Activated T-helper 1 cell treated with anti-CD3 and anti-CD28 coated beads, Interleukin-12 subunit alpha, Interleukin-12 subunit beta, Interleukin-2, Interleukin-4 antibody, amounts not matched to agents 30 ng/mL and 10 ng/mL and 1 ng/mL, durations not matched to agents 14 hours and 24 hours and 36 hours (primary cell): ENCODE measurements at regions of chr3 and their contacts with region 1.

Region 1: GRCh38 chr3:152524198-152525140 is 255.7 kb downstream of the MBNL1 start:
- DNase-seq: no peak
- H3K4me3 Mint-ChIP-seq: no peak overlapping the region
- H3K27ac Mint-ChIP-seq: no peak overlapping the region
- H3K4me1 Mint-ChIP-seq: no peaks in the 10 kb centered on the region
- H3K27me3 Mint-ChIP-seq: peaks cover 15% of the 10 kb centered on the region

Region 2: GRCh38 chr3:151439652-151440129 is 1084.8 kb before region 1 on chr3:
- intact Hi-C with region 1: loop called (anchors 1 kb)
- DNase-seq: no peak
- H3K4me3 Mint-ChIP-seq: no peak overlapping the region
- H3K27ac Mint-ChIP-seq: no peak overlapping the region
- H3K4me1 Mint-ChIP-seq: no peaks in the 10 kb centered on the region
- H3K27me3 Mint-ChIP-seq: peaks cover 3% of the 10 kb centered on the region

Region 3: DNA sequence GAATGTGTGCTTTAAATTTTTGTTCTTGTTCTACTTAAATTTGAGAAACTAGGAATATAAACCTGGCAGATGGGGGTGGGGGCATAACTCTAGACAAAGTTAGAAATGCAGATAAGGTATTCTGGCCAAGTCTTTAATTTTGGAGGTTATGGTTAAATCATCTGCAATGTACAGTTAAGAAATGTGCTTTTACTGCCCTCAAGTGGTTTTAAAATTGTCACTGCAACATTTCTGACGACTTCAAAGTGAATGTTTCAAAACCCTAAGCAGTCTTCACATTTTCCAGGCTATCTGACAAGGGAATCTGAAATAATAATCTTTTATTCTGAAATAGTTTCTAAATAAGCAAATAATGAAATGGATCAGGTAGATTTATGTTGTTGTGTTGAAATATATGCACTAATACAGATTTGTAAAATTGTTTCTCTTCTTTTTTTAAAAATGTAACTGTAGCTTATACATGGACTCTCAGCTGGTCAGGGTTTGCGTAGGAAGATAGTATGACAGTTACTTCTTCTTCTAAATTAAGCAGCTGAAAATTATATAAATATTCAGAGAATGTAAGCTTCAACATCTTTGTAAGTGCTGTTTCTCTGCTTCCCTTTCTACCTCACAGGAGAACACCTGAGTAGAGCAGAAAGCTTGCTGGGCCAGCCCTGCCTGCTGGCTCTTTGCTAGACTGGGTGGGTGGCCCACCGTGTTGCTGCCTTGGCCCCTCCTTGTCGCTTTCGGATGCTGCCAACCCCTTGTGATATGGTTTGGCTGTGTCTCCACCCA is 606.0 kb before region 1 on chr3:
- intact Hi-C with region 1: loop called (anchors 5 kb)
- DNase-seq: no peak
- H3K4me3 Mint-ChIP-seq: no peak overlapping the region
- H3K27ac Mint-ChIP-seq: no peak overlapping the region
- H3K4me1 Mint-ChIP-seq: no peaks in the 10 kb centered on the region
- H3K27me3 Mint-ChIP-seq: peaks cover 5% of the 10 kb centered on the region

Region 4: GRCh38 chr3:152365766-152366593 is 158.5 kb before region 1 on chr3:
- intact Hi-C with region 1: no loop called
- DNase-seq: no peak
- H3K4me3 Mint-ChIP-seq: no peak overlapping the region
- H3K27ac Mint-ChIP-seq: no peak overlapping the region
- H3K4me1 Mint-ChIP-seq: peaks cover 65% of the 10 kb centered on the region
- H3K27me3 Mint-ChIP-seq: no peaks in the 10 kb centered on the region

Region 5: DNA sequence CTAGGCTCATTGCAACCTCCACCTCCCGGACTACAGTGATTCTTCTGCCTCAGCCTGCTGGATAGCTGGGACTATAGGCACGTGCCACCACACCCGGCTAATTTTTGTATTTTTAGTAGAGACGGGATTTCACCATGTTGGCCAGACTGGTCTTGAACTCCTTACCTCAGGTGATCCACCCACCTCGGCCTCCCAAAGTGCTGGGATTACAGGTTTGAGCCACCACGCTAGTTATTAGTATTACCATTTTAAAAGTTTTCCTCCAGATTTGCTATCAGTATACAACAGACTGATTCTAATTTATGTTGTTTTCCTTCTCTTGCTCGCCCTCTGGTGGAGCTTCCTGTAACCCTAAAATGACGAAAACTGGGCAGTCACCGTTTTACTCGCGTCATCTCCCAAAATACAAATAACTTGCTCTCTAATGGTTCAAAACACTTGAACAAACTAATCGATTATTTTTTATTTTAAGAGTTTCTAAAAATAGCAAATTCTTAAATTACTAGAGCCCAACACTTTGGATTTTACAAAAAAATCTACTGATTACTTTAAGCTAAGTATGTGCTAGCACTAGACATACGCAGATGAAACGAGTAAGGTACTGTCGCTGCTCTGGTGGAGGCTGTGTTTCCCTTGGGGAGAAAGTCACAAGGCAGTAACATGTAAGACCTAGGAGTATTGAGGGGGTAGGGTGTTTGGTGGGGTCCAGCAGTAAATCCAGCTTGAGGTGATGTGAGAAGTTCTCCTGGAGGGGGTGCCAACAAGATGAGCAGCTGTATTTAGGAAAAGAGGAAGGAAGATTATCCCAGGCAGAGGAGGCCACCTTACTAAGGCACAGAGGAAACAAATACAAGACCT is 52.4 kb before region 1 on chr3:
- intact Hi-C with region 1: loop called (anchors 1 kb)
- DNase-seq: peak; percentile 41
- H3K4me3 Mint-ChIP-seq: peak overlapping the region; percentile 1
- H3K27ac Mint-ChIP-seq: peak overlapping the region; percentile 10
- H3K4me1 Mint-ChIP-seq: peaks cover 9% of the 10 kb centered on the region
- H3K27me3 Mint-ChIP-seq: peaks cover 7% of the 10 kb centered on the region

Region 6: GRCh38 chr3:152556731-152557254 is 32.3 kb after region 1 on chr3:
- intact Hi-C with region 1: no loop called
- DNase-seq: no peak
- H3K4me3 Mint-ChIP-seq: no peak overlapping the region
- H3K27ac Mint-ChIP-seq: no peak overlapping the region
- H3K4me1 Mint-ChIP-seq: peaks cover 9% of the 10 kb centered on the region
- H3K27me3 Mint-ChIP-seq: peaks cover 4% of the 10 kb centered on the region

Region 7: GRCh38 chr3:152574461-152575079 is 50.1 kb after region 1 on chr3:
- intact Hi-C with region 1: loop called (anchors 1 kb)
- DNase-seq: no peak
- H3K4me3 Mint-ChIP-seq: no peak overlapping the region
- H3K27ac Mint-ChIP-seq: no peak overlapping the region
- H3K4me1 Mint-ChIP-seq: no peaks in the 10 kb centered on the region
- H3K27me3 Mint-ChIP-seq: peaks cover 22% of the 10 kb centered on the region

Region 8: DNA sequence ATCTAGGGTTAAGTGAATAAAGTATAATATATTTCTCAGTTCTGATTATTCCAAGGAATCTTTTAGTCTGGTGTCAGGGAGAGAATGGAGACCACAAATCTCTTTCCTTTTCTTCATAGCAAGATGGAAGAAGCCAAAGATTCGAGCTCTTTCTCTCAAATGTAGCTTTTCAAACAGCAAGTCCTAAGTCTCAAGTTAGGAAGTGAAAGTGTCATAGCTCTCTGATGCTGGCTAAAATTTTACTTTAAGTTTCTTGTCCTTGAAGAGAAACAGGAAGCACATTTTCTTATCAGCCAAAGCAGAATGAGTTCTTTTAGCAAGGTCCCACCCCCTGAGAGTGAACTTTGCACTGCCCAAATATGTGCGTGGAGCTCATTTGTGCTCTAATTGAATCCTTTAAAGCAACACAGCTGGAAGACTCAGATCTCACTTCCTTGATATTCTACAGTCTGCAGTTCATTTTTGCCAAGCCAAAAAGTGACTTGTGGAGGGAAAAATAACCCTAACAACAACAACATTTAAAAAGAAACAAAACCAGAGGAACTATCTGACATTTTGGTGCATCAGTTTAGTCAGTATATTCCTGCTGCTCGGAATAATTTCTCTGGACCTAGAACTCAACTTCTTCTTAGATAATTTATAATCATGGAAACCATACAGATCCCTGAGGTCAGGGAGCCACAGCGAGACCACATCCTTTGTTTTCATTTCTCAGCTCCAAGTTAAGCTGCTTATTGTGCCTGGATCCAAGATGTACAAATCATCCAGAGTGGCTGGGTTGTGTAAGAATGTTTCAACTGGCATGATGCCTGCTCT is 71.7 kb after region 1 on chr3:
- intact Hi-C with region 1: no loop called
- DNase-seq: no peak
- H3K4me3 Mint-ChIP-seq: no peak overlapping the region
- H3K27ac Mint-ChIP-seq: no peak overlapping the region
- H3K4me1 Mint-ChIP-seq: peaks cover 9% of the 10 kb centered on the region
- H3K27me3 Mint-ChIP-seq: peaks cover 6% of the 10 kb centered on the region